ENCODE measurements at regions of chr16 and their contacts with region 1.

Region 1: DNA sequence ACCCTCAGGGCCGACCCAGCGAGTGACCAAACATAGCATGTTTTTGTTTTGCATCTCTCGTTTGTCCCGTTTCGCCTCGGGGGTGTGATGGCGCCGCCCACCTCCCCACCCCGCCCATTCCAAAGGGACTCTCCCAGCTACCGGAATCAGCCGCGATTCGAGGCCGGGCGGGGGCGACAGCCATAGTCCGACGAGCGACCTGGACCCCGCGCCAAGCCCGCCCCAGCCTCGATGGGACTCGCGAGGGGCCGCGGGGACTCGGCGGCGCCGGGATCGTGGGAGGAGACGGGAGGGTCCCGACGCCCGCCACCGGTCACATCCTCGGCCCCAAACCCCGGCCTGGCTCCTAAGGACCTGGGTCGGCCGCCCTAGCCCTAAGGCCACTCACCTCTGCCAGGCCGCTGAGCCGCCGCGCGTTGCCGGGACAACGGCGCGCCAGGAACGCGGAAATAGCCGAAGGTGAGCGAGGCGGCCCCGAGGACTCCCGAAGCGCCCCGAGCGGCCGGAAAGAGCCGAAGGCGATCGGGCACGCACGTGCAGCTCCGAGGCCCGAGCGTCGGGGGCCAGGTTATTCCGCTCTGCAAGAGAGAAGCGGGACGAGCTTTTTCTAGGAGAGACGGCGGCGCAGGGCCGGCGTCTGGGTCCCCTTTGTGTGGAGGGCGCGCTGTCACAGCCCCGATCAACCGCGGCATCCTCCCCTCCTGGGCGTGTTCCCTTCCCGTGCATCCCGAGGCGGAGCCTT is 1.4 kb downstream of the IFT140 start:
- DNase-seq: peak; percentile 77 to 93
- H3K4me3 ChIP-seq: peak overlapping the region; percentile 81 to 86
- H3K27ac ChIP-seq: peak overlapping the region; percentile 84 to 91
- H3K4me1 ChIP-seq: peaks cover 0 to 42% (median 26%) of the 10 kb centered on the region in 4 donors
- H3K27me3 ChIP-seq: no peaks in the 10 kb centered on the region
- CTCF ChIP-seq: no peak

Region 2: DNA sequence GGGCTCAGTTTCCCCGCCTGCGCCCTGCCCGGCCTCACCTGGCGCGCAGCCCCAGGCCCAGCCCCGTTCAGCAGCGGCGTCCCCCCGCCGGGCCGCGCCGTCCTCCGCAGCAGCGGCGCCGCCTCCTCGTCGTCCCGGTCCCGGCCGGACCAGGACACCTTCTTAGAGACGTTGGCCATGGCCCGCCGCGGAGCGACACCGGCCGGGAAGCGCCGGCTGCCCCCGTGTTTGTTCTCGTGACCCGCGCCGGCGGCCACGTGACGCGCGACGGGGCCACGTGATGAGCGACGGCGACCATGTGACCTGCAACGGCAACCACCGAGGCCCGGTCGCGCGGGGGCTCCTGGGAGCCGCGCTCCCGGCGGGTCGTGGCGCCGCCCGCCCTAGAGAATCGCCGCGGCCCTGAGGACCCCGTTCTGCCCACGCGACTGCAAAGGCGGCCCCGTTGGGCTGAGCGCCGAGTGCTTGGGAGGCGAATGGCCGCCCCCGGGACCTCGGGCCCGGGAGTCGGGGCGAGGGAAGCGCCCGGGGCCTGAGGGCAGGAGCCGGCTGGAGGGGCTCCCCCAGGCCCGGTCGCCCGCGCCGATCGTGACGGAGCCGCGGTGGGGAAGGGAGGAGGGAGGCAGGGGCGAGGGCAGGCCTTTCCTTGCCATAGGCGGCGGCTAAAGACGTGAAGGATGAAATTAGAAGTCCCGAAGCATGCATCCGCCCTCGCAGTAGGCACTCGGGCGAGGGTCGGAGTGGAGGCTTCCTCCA is 135.5 kb before region 1 on chr16 and contains the start of gene CLCN7:
- intact Hi-C with region 1: loop called (anchors 5 kb)
- DNase-seq: peak; percentile 90 to 94
- H3K4me3 ChIP-seq: peak within 1 kb of the TSS; percentile 79 to 95
- H3K27ac ChIP-seq: peak within 1 kb of the TSS; percentile 85 to 88
- H3K4me1 ChIP-seq: peaks cover 0 to 33% (median 20%) of the 10 kb centered on the region in 4 donors
- H3K27me3 ChIP-seq: no peaks in the 10 kb centered on the region
- CTCF ChIP-seq: no peak

Region 3: DNA sequence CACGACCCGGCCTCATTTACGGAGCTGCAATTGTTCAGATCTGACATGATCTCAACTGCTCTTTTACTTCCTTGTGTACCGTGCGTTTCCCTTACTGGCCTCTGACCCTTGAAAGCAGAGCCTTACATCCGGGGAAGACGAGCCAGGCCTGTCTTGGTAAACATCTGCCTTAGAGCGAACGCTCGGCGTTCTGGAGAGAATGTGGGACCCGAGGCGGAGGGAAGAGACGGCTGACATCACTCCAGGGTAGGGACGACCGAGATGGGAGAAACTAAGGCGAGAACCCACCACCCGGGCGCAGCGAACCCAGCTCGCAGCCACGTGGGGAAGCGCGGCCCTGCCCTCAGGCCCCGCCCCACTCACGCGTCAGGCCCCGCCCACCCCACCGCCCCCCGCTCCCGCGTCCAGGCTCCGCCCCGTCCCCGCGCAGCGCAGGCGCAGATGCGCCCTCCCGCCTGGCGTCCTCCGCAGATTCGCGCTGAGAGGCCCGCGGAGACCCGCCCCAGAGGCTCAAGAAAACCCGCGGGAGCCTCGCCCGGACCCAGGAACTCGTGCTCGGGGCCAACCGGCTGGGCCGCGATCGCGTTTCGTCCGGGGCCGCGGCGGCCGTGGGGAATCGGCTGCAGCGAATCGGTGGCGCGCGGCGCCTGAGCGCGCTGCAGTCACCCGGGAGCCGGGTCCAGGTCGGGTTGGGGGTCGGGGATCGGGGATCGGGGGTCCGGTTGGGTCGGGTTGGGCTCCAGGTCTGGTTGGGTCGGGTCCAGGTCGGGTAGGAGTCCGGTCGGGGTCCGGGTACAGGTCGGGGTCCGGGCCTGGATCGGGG is 117.3 kb before region 1 on chr16 and contains the start of gene TELO2:
- intact Hi-C with region 1: loop called (anchors 5 kb)
- DNase-seq: peak; percentile 58 to 85
- H3K4me3 ChIP-seq: peak within 1 kb of the TSS; percentile 79 to 81
- H3K27ac ChIP-seq: peak within 1 kb of the TSS; percentile 85 to 86
- H3K4me1 ChIP-seq: peaks cover 0 to 31% (median 17%) of the 10 kb centered on the region in 4 donors
- H3K27me3 ChIP-seq: no peaks in the 10 kb centered on the region
- CTCF ChIP-seq: no peak

Region 4: DNA sequence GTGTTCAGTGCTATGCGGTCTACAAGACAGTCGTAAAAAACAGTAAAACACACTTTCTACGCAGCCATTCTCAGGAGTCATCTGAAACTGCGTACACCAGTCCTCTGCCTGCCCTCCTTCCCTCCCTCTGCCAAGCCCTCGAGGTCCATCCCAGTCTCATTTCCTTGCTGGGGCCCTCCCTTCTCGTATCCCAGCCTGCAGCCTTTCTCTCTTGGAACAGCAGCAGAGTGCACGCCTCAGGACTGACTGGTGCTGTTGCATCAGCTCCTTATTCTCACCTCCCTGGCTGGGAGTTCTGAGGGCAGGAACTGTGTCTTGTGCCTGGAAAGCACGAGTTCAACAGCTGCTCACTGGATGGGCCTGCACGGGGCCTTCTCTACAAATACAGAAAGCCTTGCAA is 229.1 kb after region 1 on chr16:
- intact Hi-C with region 1: no loop called
- DNase-seq: no peak
- H3K4me3 ChIP-seq: no peak overlapping the region
- H3K27ac ChIP-seq: no peak overlapping the region
- H3K4me1 ChIP-seq: no peaks in the 10 kb centered on the region
- H3K27me3 ChIP-seq: no peaks in the 10 kb centered on the region
- CTCF ChIP-seq: no peak

Region 5: DNA sequence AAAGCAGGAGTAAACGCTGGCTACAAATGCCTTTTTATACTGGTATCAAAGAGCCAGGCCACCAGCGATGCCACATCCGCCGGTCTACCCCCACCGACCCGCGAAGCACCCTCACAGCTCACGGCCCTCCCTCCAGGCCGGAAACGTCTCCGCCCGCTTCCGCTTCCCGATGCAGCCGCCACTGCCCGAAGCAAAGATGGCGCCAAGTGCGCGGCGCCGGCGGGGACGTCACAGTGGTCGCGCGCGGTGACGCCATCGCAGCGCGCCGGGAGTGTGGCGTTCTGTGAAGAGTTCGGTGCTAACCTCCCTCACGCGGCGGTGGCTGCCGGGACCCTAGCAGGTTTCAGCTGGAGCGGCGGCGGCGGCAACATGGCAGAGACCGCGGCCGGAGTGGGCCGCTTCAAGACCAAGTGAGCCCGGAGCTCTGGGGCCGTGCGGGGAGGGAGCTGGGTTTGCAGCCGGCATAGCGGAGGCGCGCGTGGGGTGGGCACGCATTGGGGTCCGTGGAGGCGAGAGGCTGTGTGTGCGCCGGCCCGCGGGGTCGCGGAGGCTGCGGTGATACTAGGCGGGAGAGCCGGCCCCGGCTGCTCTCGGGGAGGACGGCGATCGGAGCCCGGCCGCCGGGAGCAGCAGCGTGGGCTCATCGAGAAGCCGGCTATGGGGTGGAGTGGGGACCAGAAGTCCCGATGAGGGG is 361.5 kb after region 1 on chr16 and contains the start of gene TBL3:
- intact Hi-C with region 1: loop called (anchors 5 kb)
- DNase-seq: peak; percentile 91 to 96
- H3K4me3 ChIP-seq: peak within 1 kb of the TSS; percentile 79 to 99
- H3K27ac ChIP-seq: peak within 1 kb of the TSS; percentile 80 to 94
- H3K4me1 ChIP-seq: peaks cover 0 to 32% (median 21%) of the 10 kb centered on the region in 4 donors
- H3K27me3 ChIP-seq: peaks cover 0 to 36% of the 10 kb centered on the region in 2 donors
- CTCF ChIP-seq: no peak